ENCODE measurements at regions of chr3 and their contacts with region 1.

Region 1: DNA sequence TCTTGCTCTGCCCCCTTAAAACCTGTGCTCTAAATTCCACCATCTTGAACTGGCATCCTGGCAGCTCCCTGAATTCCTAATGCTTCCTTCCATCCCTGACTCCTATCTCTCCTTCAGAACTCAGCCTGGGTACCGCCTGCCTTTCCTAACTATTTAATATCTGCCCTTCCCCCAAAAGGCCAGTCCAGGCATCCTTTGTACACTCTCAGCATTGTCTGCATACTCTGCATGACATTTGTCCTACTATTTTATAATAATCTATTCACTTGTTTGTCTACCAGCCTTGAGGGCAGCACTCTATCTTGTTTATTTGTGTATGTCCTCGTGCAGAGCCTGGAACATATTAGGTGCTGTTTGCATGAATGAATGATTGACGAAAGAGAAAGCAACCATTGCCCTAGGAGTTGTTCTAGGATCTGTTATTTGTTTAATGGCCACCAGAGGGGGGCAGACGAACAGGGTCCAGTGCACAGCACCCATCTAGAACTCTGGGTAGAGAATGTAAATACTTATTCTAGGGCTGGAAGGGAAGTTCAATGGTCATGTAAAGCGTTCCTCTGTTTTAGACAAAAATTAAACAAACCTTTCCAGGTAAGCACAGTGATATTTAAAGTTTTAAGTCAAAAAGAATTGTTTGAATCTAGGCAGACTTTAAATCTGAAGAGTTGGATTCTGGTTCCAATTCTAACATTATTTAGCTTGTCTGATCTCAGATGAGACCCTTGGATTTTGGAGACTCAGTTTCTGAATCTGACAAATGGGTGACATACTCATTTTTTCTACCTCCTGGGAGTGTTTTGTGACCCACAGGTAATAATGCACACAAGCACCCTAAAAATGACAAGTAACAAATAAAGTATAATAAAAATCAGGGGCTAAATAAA is 125.8 kb upstream of the GALNT15 start:
- DNase-seq: peak; percentile 23
- H3K4me3 Mint-ChIP-seq: no peak overlapping the region
- H3K27ac Mint-ChIP-seq: no peak overlapping the region
- H3K4me1 Mint-ChIP-seq: peaks cover 6% of the 10 kb centered on the region
- H3K27me3 Mint-ChIP-seq: no peaks in the 10 kb centered on the region

Region 2: DNA sequence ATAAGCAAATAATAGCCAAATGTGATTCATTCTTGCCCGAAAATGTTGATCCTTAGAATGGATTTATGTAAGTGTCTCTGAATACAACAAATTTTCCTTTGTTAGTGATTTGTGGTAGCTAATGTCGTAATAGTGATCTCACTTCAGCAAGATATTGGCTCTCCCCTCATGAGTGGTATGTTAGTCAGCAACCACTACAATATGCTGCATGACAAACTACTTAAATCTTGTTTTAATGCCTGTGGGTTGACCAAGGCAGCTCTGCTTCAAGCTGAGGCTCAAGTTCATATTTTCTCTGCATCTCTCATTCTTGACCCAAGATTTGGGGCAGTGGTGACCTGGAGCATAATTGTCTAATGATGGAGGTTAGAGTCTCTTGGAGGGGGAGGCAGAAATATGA is 76.0 kb after region 1 on chr3:
- intact Hi-C with region 1: no loop called
- DNase-seq: no peak
- H3K4me3 Mint-ChIP-seq: no peak overlapping the region
- H3K27ac Mint-ChIP-seq: no peak overlapping the region
- H3K4me1 Mint-ChIP-seq: no peaks in the 10 kb centered on the region
- H3K27me3 Mint-ChIP-seq: no peaks in the 10 kb centered on the region

Region 3: DNA sequence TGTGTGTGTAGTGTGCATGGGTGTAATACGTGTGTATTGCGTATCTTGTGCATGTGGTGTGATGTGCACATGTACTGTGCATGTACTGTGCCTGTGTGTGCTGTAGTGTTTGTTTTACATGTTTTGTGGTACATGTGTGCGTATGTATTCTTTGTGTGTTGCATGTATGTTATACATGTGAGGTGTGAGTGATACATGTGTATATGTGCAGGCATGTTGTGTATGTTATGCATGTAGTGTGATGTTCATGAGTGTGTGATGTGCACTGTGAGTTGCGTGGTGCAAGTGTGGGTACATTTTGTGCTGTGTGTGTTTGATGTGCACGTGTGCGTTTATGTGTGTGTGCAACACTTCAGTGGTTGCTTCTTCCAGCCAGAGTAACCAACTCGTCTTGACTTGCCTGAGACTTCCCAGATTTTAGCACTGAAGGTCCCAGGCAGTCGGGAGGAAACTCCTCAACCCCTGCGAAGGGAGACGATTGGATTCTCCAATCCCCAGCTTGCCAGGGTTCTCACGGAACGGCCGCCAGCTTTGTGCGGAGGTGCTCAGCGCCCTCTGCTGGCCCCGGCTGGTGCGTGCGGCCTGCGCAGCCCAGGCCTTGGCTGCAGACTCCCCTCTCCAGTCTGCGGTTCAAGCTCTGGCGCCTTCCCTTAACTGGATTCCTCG is 129.4 kb after region 1 on chr3:
- intact Hi-C with region 1: loop called (anchors 1 kb)
- DNase-seq: peak; percentile 45
- H3K4me3 Mint-ChIP-seq: no peak overlapping the region
- H3K27ac Mint-ChIP-seq: no peak overlapping the region
- H3K4me1 Mint-ChIP-seq: no peaks in the 10 kb centered on the region
- H3K27me3 Mint-ChIP-seq: peaks cover 2% of the 10 kb centered on the region

Region 4: GRCh38 chr3:16247276-16248061 is 198.8 kb after region 1 on chr3:
- intact Hi-C with region 1: loop called (anchors 1 kb)
- DNase-seq: peak; percentile 70
- H3K4me3 Mint-ChIP-seq: no peak overlapping the region
- H3K27ac Mint-ChIP-seq: no peak overlapping the region
- H3K4me1 Mint-ChIP-seq: peaks cover 32% of the 10 kb centered on the region
- H3K27me3 Mint-ChIP-seq: peaks cover 2% of the 10 kb centered on the region

Region 5: GRCh38 chr3:16550676-16551341 is 502.1 kb after region 1 on chr3:
- intact Hi-C with region 1: loop called (anchors 1 kb)
- DNase-seq: peak; percentile 67
- H3K4me3 Mint-ChIP-seq: no peak overlapping the region
- H3K27ac Mint-ChIP-seq: peak overlapping the region; percentile 71
- H3K4me1 Mint-ChIP-seq: peaks cover 27% of the 10 kb centered on the region
- H3K27me3 Mint-ChIP-seq: peaks cover 6% of the 10 kb centered on the region

Region 6: DNA sequence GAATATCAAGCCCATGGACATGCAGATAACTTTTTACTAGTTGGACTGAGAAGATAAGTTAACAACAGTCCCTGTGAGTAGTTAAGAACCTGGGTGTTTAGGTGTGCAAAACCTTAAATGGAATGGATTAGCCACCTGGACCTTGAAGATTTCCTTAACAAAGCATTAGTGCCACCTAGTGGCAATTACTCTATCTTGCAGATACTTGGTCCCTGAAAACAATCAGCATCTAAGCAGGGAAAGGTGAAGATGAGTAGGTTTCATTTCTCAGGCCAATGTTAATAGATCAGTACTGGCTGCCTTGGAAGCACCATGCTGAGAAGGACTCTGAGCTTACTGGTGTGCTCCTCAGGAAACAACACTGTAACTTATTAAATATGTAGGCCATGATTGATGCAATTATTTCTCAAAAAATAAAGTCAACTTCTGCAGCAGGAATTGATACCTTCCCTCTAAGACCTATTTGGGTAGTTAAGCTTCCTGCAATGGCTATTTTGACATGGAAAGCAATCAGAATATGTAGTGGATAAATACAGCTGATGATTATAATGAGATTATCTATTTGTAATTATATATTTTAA is 1364.4 kb after region 1 on chr3:
- intact Hi-C with region 1: loop called (anchors 5 kb)
- DNase-seq: peak; percentile 16
- H3K4me3 Mint-ChIP-seq: no peak overlapping the region
- H3K27ac Mint-ChIP-seq: no peak overlapping the region
- H3K4me1 Mint-ChIP-seq: no peaks in the 10 kb centered on the region
- H3K27me3 Mint-ChIP-seq: no peaks in the 10 kb centered on the region

Measured in activated T-helper 1 cell treated with anti-CD3 and anti-CD28 coated beads, Interleukin-12 subunit alpha, Interleukin-12 subunit beta, Interleukin-2, Interleukin-4 antibody, amounts not matched to agents 30 ng/mL and 10 ng/mL and 1 ng/mL, durations not matched to agents 14 hours and 24 hours and 36 hours (primary cell).